HepG2 (cell line): ENCODE measurements at regions of chr16 and their contacts with region 1.

Region 1: DNA sequence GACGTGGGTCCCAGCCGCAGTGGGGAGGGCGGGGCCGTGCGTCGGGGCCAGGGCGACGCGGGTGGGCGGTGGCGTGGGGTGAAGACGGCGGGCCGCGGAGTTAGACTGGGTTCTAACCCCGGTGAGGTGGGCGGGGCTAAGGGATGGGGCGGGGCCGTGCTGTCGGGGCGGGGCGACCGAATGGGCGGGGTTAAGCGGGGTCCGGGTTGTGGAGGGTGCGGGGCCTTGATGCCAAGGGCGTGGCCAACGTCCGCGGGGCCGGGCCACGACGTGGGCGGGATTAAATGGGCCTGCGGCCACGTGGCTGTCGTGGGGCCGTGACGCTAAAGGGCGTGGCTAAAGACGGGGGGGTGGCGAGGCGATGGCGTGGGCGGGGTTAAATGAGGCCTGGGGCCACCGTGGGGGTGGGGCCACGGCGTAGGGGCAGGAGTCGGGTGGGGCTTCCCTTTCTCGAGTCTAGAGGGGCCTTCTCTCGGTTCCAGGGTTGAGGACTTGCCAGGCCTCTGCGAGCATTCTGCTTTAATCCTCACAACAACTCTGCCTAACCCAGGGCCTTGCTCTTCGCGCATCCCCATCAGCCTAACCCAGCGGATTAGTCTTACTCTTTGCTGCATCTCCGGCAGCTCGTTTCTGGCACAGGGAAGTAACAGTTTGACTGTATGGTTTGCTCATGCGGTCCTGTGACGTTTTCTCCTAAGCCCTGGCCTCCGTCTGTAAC is 739 bp downstream of the TCF25 start:
- DNase-seq: peak; percentile 89
- ATAC-seq: peak; percentile 61
- H3K4me3 ChIP-seq: peak overlapping the region; percentile 84 to 99 (median 98)
- H3K27ac ChIP-seq: peak overlapping the region; percentile 100
- H3K4me1 ChIP-seq: peaks cover 34% of the 10 kb centered on the region
- H3K27me3 ChIP-seq: no peaks in the 10 kb centered on the region
- CTCF ChIP-seq: no peak
- EP300 ChIP-seq: peak in 1 of 2 experiments; percentile 38; a peak in 1 of 4 replicates
- POLR2A ChIP-seq: peak in 1 of 2 experiments; percentile 65
- RAD21 ChIP-seq: no peak

Region 2: GRCh38 chr16:89357055-89357816 is 516.9 kb before region 1 on chr16:
- CTCF ChIA-PET with region 1: no interaction called
- POLR2A ChIA-PET with region 1: no interaction called
- in situ Hi-C with region 1: no loop called
- intact Hi-C with region 1: no loop called
- DNase-seq: peak; percentile 40
- ATAC-seq: peak; percentile 76
- H3K4me3 ChIP-seq: no peak overlapping the region
- H3K27ac ChIP-seq: no peak overlapping the region
- H3K4me1 ChIP-seq: peaks cover 53% of the 10 kb centered on the region
- H3K27me3 ChIP-seq: no peaks in the 10 kb centered on the region
- CTCF ChIP-seq: peak; percentile 60
- EP300 ChIP-seq: no peak
- POLR2A ChIP-seq: no peak
- RAD21 ChIP-seq: peak; percentile 15; the same call in 1 of the 2 replicates

Region 3: GRCh38 chr16:89700100-89700648 is 174.0 kb before region 1 on chr16:
- CTCF ChIA-PET with region 1: no interaction called
- POLR2A ChIA-PET with region 1: interaction called, 16 read pairs
- in situ Hi-C with region 1: no loop called
- intact Hi-C with region 1: no loop called
- DNase-seq: peak; percentile 99
- ATAC-seq: peak; percentile 59
- H3K4me3 ChIP-seq: peak overlapping the region; percentile 71 to 89 (median 84)
- H3K27ac ChIP-seq: peak overlapping the region; percentile 82
- H3K4me1 ChIP-seq: peaks cover 45% of the 10 kb centered on the region
- H3K27me3 ChIP-seq: no peaks in the 10 kb centered on the region
- CTCF ChIP-seq: peak; percentile 97
- EP300 ChIP-seq: peak in 1 of 2 experiments; percentile 53; a peak in 1 of 4 replicates
- POLR2A ChIP-seq: no peak
- RAD21 ChIP-seq: peak; percentile 96

Region 4: GRCh38 chr16:89822188-89823086 is 51.7 kb before region 1 on chr16:
- CTCF ChIA-PET with region 1: no interaction called
- POLR2A ChIA-PET with region 1: interaction called, 23 read pairs
- in situ Hi-C with region 1: no loop called
- intact Hi-C with region 1: loop called (anchors 5 kb)
- DNase-seq: peak; percentile 99
- ATAC-seq: peak; percentile 95
- H3K4me3 ChIP-seq: peak overlapping the region; percentile 43 to 73 (median 67); a peak in 5 of 6 replicates
- H3K27ac ChIP-seq: peak overlapping the region; percentile 98
- H3K4me1 ChIP-seq: peaks cover 92% of the 10 kb centered on the region
- H3K27me3 ChIP-seq: no peaks in the 10 kb centered on the region
- CTCF ChIP-seq: peak; percentile 2; the same call in 1 of the 2 replicates
- EP300 ChIP-seq: peak; percentile 79 to 90
- POLR2A ChIP-seq: peak; percentile 82 to 88
- RAD21 ChIP-seq: no peak; the same call in 1 of the 2 replicates

Region 5: GRCh38 chr16:89833664-89834255 is 40.4 kb before region 1 on chr16:
- CTCF ChIA-PET with region 1: no interaction called
- POLR2A ChIA-PET with region 1: interaction called, 48 read pairs
- in situ Hi-C with region 1: no loop called
- intact Hi-C with region 1: loop called (anchors 5 kb)
- DNase-seq: no peak
- ATAC-seq: no peak
- H3K4me3 ChIP-seq: no peak overlapping the region
- H3K27ac ChIP-seq: no peak overlapping the region
- H3K4me1 ChIP-seq: peaks cover 68% of the 10 kb centered on the region
- H3K27me3 ChIP-seq: no peaks in the 10 kb centered on the region; a peak in 1 of 5 replicates
- CTCF ChIP-seq: no peak
- EP300 ChIP-seq: no peak
- POLR2A ChIP-seq: 0 out of 4 replicates have a peak, but pooled peaks of 1 of the 2 experiments have one; percentile 7
- RAD21 ChIP-seq: no peak

Region 6: DNA sequence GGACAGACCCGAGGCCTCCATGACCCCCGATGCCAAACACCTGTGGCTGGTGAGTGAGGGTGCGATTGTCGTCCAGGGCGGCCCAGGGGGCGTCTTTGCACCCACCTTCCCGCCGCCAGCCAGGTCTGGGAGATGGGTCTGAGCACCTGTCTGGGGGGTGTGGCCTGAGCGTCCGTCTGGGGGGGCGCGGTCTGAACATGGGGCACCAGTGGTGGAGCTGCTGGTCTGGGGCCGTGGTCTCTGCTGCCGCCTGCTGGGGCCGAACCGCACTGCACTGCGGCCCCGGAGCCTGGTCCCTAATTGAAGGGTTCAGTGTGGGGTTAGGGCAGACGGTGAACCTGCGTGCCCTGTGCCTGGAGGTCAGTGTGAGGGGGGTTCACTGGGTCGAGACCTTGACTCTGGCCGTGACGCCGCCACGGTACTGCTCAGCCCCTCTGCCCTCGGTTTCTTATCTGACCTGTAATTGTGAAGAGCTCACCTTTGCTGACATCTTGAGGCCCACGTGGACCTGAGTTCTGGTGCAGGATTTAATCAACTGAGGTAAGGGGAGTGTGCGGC is 13.3 kb before region 1 on chr16:
- CTCF ChIA-PET with region 1: no interaction called
- POLR2A ChIA-PET with region 1: interaction called, 11 read pairs
- in situ Hi-C with region 1: no loop called
- intact Hi-C with region 1: no loop called
- DNase-seq: peak; percentile 52
- ATAC-seq: peak; percentile 90
- H3K4me3 ChIP-seq: no peak overlapping the region
- H3K27ac ChIP-seq: no peak overlapping the region
- H3K4me1 ChIP-seq: 0 out of 2 replicates have a peak, but pooled peaks cover 4% of the 10 kb centered on the region
- H3K27me3 ChIP-seq: no peaks in the 10 kb centered on the region
- CTCF ChIP-seq: peak; percentile 99
- EP300 ChIP-seq: no peak
- POLR2A ChIP-seq: no peak
- RAD21 ChIP-seq: peak; percentile 99

Region 7: GRCh38 chr16:89917773-89918452 is 43.8 kb after region 1 on chr16:
- CTCF ChIA-PET with region 1: no interaction called
- POLR2A ChIA-PET with region 1: interaction called, 77 read pairs
- in situ Hi-C with region 1: no loop called
- intact Hi-C with region 1: loop called (anchors 2 kb)
- DNase-seq: peak; percentile 90
- ATAC-seq: peak; percentile 54
- H3K4me3 ChIP-seq: peak overlapping the region; percentile 45 to 90 (median 49)
- H3K27ac ChIP-seq: peak overlapping the region; percentile 77
- H3K4me1 ChIP-seq: peaks cover 83% of the 10 kb centered on the region
- H3K27me3 ChIP-seq: no peaks in the 10 kb centered on the region; a peak in 1 of 5 replicates
- CTCF ChIP-seq: peak; percentile 46; the same call in 1 of the 2 replicates
- EP300 ChIP-seq: peak; percentile 57 to 72
- POLR2A ChIP-seq: no peak; a peak in 1 of 4 replicates
- RAD21 ChIP-seq: no peak; the same call in none of the 2 replicates

Region 8: DNA sequence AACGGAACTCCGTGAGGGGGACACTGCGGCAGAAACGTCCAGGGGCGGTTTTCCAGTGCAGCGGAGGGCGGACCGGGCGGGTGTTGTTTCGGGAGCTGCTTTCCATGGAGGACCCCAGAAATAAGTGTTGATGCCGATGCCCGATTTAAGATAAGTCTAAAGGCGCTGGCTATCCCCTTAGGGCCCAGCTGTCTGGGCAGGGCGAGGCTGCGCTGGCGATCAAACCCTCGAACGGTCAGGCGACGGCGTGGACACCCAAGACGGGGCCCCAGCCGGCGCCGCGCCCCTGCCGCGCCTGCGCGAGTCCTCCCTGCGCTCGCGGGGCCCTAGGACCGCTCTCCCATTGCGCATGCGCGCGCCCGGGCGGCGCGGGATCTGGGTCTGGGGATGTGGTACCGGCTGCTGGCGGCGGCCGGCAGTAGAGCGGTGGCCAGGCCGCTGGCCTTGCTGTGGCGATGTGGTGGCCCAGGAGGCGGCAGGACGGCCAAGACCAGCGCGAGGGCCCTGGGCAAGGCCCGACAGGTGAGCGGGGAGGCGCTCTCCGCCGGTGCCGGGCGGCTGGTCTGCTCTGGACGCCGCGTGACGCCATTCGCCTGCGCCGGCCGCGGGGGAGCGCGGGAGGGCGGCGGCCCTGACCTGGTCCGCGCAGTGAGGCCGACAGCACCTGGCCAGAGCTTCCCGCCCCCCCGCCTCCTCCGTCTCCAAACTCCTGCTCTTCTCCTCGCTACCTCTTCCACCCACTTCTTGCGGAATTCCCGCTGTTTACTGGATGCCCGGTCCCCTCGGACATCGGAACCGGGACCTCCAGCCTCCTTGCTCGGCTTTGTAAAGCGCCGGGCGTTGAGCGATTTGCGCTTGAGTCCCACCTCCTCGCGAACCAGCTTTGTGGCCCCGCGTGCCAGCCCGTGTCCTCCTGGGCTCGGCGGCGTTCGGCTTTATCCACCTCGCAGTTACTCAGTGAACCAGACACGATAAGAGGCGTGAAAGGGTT is 98.4 kb after region 1 on chr16:
- CTCF ChIA-PET with region 1: no interaction called
- POLR2A ChIA-PET with region 1: interaction called, 11 read pairs
- in situ Hi-C with region 1: no loop called
- intact Hi-C with region 1: no loop called
- DNase-seq: peak; percentile 92
- ATAC-seq: peak; percentile 85
- H3K4me3 ChIP-seq: peak overlapping the region; percentile 76 to 96 (median 95)
- H3K27ac ChIP-seq: peak overlapping the region; percentile 88
- H3K4me1 ChIP-seq: peaks cover 49% of the 10 kb centered on the region
- H3K27me3 ChIP-seq: no peaks in the 10 kb centered on the region; a peak in 1 of 5 replicates
- CTCF ChIP-seq: peak; percentile 31; the same call in 1 of the 2 replicates
- EP300 ChIP-seq: peak in 1 of 2 experiments; percentile 47; a peak in 1 of 4 replicates
- POLR2A ChIP-seq: peak; percentile 92 to 97
- RAD21 ChIP-seq: peak; percentile 64; the same call in 1 of the 2 replicates

Region 9: GRCh38 chr16:90057738-90058173 is 183.6 kb after region 1 on chr16:
- CTCF ChIA-PET with region 1: no interaction called
- POLR2A ChIA-PET with region 1: no interaction called
- in situ Hi-C with region 1: no loop called
- intact Hi-C with region 1: no loop called
- DNase-seq: peak; percentile 71
- ATAC-seq: peak; percentile 71
- H3K4me3 ChIP-seq: no peak overlapping the region
- H3K27ac ChIP-seq: no peak overlapping the region
- H3K4me1 ChIP-seq: peaks cover 45% of the 10 kb centered on the region
- H3K27me3 ChIP-seq: 0 out of 5 replicates have a peak, but pooled peaks cover 0 to 5% of the 10 kb centered on the region in 2 experiments
- CTCF ChIP-seq: no peak
- EP300 ChIP-seq: no peak
- POLR2A ChIP-seq: no peak
- RAD21 ChIP-seq: no peak